SK-N-SH (cell line): ENCODE measurements at regions of chr1 and their contacts with region 1.

Region 1: GRCh38 chr1:17909634-17910033 is 154.5 kb downstream of the ACTL8 start:
- DNase-seq: no peak
- H3K4me3 ChIP-seq: no peak overlapping the region
- H3K27ac ChIP-seq: no peak overlapping the region
- H3K4me1 ChIP-seq: no peaks in the 10 kb centered on the region; a peak in 1 of 4 replicates
- H3K27me3 ChIP-seq: no peaks in the 10 kb centered on the region
- CTCF ChIP-seq: peak; percentile 42
- EP300 ChIP-seq: no peak
- RAD21 ChIP-seq: peak; percentile 67

Region 2: DNA sequence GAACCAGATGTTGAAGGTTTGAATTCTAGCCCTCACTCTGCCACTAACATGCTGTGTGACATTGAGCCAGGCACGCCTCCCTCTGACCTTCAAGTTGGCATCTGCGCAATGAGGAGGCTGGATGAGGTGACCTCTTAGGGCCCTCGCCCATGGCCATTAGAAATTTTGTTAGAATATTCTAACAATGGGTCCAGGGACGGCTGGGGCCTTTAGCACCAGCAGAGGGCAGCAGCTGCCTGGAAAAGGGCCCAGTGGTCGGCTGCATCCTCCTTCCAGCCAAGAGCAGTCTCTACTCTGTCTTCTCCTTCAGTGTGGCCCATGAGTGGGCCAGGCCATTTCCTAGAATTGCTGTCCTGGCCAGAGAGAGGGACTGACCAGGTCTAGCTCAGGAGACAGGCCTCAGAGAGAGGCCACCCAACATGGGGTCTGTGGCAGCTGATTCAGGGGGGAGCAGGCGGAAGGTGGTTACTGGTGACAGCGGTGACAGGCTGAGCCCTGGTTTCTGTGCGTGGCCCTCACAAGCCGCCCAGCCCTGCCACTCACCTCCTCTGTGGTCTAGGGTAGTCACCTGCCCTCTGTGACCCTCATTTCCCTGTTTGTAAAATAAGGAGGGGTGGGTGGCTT is 255.8 kb before region 1 on chr1:
- CTCF ChIA-PET with region 1: interaction called, 10 read pairs
- POLR2A ChIA-PET with region 1: no interaction called
- DNase-seq: peak; percentile 85
- H3K4me3 ChIP-seq: no peak overlapping the region; a peak in 1 of 4 replicates
- H3K27ac ChIP-seq: no peak overlapping the region
- H3K4me1 ChIP-seq: peaks cover 0 to 6% of the 10 kb centered on the region in 2 experiments; a peak in 1 of 4 replicates
- H3K27me3 ChIP-seq: no peaks in the 10 kb centered on the region
- CTCF ChIP-seq: peak; percentile 79
- EP300 ChIP-seq: no peak
- RAD21 ChIP-seq: peak; percentile 84